CD8-positive, alpha-beta memory T cell (primary cell): ENCODE measurements at regions of chr13 and their contacts with region 1.

Region 1: DNA sequence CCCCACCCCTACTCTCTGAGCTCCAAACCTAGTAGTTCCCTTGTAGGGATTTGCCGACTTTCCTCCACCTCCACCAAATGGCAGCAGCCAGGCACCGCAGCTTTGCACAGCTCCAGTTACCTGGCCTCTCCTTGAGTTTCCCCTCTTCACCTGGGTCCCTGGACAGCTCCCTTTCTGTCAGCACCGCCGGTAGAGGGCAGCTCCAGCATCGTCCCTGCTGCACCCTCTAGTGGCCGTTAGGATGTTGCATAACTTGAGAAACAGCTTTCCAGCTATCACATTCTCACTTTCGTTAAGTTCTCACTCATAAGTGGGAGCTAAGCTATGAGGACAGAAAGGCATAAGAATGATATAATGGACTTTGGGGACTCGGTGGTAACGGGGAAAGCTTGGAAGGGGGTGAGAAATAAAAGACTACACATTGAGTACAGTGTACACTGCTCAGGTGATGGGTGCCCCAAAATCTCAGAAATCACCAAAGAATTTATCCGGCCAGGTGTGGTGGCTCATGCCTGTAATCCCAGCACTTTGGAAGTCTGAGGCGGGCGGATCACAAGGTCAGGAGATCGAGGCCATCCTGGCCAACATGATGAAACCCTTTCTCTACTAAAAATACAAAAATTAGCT is 60.4 kb upstream of the OLFM4 start:
- DNase-seq: peak; percentile 23 to 56 (median 34)
- H3K4me3 ChIP-seq: no peak overlapping the region
- H3K4me3 Mint-ChIP-seq: no peak overlapping the region
- H3K27ac ChIP-seq: no peak overlapping the region
- H3K27ac Mint-ChIP-seq: no peak overlapping the region
- H3K4me1 ChIP-seq: no peaks in the 10 kb centered on the region
- H3K4me1 Mint-ChIP-seq: peaks cover 0 to 1% (median 0%) of the 10 kb centered on the region in 3 donors
- H3K27me3 ChIP-seq: no peaks in the 10 kb centered on the region
- H3K27me3 Mint-ChIP-seq: peaks cover 11 to 19% of the 10 kb centered on the region in 2 donors

Region 2: GRCh38 chr13:52911340-52911739 is 56.8 kb before region 1 on chr13:
- CTCF ChIA-PET with region 1: no interaction called
- POLR2A ChIA-PET with region 1: no interaction called
- DNase-seq: no peak
- H3K4me3 ChIP-seq: no peak overlapping the region
- H3K4me3 Mint-ChIP-seq: no peak overlapping the region
- H3K27ac ChIP-seq: no peak overlapping the region
- H3K27ac Mint-ChIP-seq: no peak overlapping the region
- H3K4me1 ChIP-seq: no peaks in the 10 kb centered on the region
- H3K4me1 Mint-ChIP-seq: no peaks in the 10 kb centered on the region
- H3K27me3 ChIP-seq: no peaks in the 10 kb centered on the region
- H3K27me3 Mint-ChIP-seq: peaks cover 3 to 10% of the 10 kb centered on the region in 2 donors

Region 3: GRCh38 chr13:52980695-52981094 is 12.5 kb after region 1 on chr13:
- CTCF ChIA-PET with region 1: interaction called, 10 read pairs
- POLR2A ChIA-PET with region 1: no interaction called
- DNase-seq: no peak
- H3K4me3 ChIP-seq: no peak overlapping the region
- H3K4me3 Mint-ChIP-seq: no peak overlapping the region
- H3K27ac ChIP-seq: no peak overlapping the region
- H3K27ac Mint-ChIP-seq: no peak overlapping the region
- H3K4me1 ChIP-seq: no peaks in the 10 kb centered on the region
- H3K4me1 Mint-ChIP-seq: no peaks in the 10 kb centered on the region
- H3K27me3 ChIP-seq: no peaks in the 10 kb centered on the region
- H3K27me3 Mint-ChIP-seq: peaks cover 8 to 15% of the 10 kb centered on the region in 2 donors